Upper lobe of right lung (tissue), 1 donor: ENCODE measurements at regions of chrX and their contacts with region 1.

Region 1: DNA sequence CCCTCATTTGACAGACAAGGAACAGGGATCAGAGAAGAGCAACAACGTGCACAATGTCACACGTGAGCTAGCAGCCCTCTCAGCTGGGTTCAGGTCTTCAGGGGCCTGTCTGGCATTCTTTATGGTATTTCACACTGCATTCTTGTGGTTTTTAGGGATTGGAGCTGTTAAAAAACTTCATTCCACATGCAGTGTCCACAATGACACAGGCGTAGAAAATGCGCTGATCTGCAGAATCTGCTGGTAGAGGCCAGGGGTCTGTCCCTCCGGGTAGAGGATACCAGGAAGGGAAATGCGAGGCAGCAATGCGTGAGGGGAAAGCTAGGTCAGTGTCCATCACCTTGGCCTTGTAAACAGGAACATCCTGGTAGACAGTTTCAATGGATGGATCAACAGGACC is 36.6 kb downstream of the MAP7D3 start:
- DNase-seq: no peak
- ATAC-seq: peak; percentile 32
- H3K4me3 ChIP-seq: no peak overlapping the region
- H3K27ac ChIP-seq: no peak overlapping the region
- H3K4me1 ChIP-seq: no peaks in the 10 kb centered on the region
- H3K27me3 ChIP-seq: no peaks in the 10 kb centered on the region
- CTCF ChIP-seq: no peak

Region 2: DNA sequence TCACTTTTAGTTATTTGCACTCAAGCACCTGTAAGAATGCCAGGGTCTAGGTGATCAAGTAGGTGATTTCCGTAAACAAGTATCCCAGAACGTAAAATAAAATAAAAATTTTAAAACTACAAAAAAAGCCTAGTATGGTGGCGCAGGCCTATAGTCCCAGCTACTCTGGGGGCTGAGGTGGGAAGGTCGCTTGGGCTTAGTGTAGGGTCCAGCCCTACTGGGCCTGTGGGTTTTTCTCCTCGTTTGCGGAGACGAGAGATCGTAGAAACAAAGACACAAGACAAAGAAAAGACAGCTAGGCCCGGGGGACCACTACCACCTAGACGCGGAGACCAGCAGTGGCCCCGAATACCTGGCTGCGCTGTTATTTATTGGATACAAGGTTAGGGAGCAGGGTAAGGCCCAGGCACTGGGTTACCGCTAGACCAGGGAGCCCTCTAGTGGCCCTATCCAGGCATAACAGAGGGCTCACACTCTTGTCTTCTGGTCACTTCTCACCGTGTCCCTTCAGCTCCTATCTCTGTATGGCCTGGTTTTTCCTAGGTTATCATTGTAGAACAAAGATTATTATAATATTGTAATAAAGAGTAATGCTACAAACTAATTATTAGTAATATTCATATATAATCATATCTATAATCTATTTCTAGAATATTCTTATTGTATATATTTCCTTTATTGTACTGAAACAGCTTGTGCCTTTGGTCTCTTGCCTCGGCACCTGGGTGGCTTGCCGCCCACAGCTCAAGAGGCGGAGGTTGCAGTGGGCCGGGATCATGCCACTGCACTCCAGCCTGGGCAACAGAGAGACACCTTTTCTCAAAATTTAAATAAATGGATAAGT is 282.7 kb before region 1 on chrX:
- intact Hi-C with region 1: no loop called
- DNase-seq: no peak
- ATAC-seq: peak; percentile 72
- H3K4me3 ChIP-seq: no peak overlapping the region
- H3K27ac ChIP-seq: no peak overlapping the region
- H3K4me1 ChIP-seq: no peaks in the 10 kb centered on the region
- H3K27me3 ChIP-seq: no peaks in the 10 kb centered on the region
- CTCF ChIP-seq: peak; percentile 63

Region 3: GRCh38 chrX:136168929-136169735 is 45.4 kb before region 1 on chrX:
- intact Hi-C with region 1: loop called (anchors 5 kb)
- DNase-seq: no peak
- ATAC-seq: peak; percentile 54
- H3K4me3 ChIP-seq: no peak overlapping the region
- H3K27ac ChIP-seq: peak overlapping the region; percentile 65
- H3K4me1 ChIP-seq: peaks cover 3% of the 10 kb centered on the region
- H3K27me3 ChIP-seq: no peaks in the 10 kb centered on the region
- CTCF ChIP-seq: no peak